ENCODE measurements at regions of chr7 and their contacts with region 1.

Region 1: DNA sequence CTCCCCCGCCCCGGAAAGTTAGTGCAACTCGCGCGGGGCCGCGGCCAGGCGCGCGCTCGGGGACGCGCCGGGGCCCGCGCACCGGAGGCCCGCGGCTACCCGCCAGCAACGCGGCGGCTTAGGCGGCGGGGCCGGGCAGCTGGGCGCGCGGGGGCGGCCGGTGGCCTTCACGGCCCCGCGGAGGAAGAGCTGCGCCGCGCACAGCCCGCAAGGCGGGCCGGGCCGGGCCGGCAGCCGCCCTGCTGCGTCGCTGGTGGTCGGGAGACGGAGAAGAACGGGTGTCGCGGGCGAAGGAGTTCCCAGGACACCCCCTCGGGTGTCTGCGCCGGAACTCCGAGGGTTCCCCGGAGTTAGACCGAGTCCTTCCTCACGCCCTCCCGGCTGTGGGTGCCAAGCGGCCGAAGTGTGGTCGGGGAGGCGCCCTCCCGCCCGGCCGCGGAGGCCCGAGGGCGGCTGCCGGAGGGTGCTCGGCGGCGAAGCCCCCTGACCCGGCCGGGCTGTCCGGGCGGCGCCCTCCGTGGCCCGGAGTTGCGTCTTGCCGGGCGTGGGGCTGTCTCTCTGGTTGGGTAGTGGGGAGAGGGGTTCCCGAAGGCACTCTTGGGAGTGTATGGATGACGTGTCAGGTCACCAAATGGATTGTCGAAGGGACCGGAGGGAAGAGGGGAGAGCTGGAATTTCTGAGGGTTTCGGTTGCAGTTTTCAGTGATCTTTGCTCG is 584 bp downstream of the ST7 start:
- DNase-seq: peak; percentile 73
- H3K4me3 ChIP-seq: peak overlapping the region; percentile 83
- H3K27ac ChIP-seq: peak overlapping the region; percentile 64
- H3K4me1 ChIP-seq: peaks cover 28% of the 10 kb centered on the region
- CTCF ChIP-seq: 0 out of 2 replicates have a peak, but pooled peaks have one; percentile 16

Region 2: GRCh38 chr7:116150588-116150987 is 803.3 kb before region 1 on chr7:
- CTCF ChIA-PET with region 1: no interaction called
- POLR2A ChIA-PET with region 1: no interaction called
- intact Hi-C with region 1: loop called (anchors 10 kb)
- DNase-seq: no peak
- H3K4me3 ChIP-seq: no peak overlapping the region
- H3K27ac ChIP-seq: no peak overlapping the region
- H3K4me1 ChIP-seq: peaks cover 3% of the 10 kb centered on the region
- CTCF ChIP-seq: no peak

Region 3: DNA sequence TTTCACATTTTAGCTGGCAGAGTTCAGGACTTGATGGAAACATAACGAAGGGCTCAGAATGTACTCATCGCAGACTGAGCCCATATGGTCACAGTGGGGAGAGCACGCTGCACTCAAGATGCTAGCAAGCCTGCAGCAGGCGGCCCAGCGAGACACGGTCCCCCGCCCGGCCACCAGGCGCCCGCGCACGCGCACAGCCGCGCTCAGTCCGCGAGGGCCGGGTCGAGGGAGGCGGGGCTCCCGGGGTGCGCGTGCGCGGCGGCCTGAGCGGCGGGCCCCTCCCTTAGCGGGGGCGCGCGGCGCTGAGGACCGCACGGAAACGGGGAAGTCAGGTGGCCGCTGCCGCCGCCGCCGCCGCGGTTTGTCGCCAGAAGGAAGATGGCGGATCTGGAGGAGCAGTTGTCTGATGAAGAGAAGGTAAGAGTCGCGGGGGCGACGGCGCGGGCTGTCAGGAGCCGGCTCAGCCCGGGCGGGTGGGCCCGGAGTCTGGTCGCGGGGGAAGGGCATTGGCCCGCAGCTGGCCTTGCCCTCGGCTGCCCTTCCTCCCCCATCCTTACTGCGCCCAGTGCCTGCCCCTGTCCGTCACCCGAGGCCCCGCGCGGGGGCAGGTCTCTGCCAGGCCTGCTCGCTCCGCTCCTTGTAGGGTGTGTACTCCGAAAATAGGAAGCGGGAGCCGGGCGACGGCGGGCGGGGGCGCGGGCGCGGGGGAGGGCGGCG is 91.5 kb before region 1 on chr7 and contains the start of gene CAPZA2:
- CTCF ChIA-PET with region 1: no interaction called
- POLR2A ChIA-PET with region 1: interaction called, 4 read pairs
- intact Hi-C with region 1: loop called (anchors 1 kb)
- DNase-seq: peak; percentile 94
- H3K4me3 ChIP-seq: peak within 1 kb of the TSS; percentile 99
- H3K27ac ChIP-seq: peak within 1 kb of the TSS; percentile 58
- H3K4me1 ChIP-seq: peaks cover 11% of the 10 kb centered on the region
- CTCF ChIP-seq: 0 out of 2 replicates have a peak, but pooled peaks have one; percentile 9
- total RNA-seq, gene CAPZA2: 42.1 and 53.3 TPM in 2 replicates

Region 4: GRCh38 chr7:117127585-117128168 is 173.8 kb after region 1 on chr7:
- CTCF ChIA-PET with region 1: no interaction called
- POLR2A ChIA-PET with region 1: interaction called, 4 read pairs
- intact Hi-C with region 1: loop called (anchors 5 kb)
- DNase-seq: peak; percentile 54
- H3K4me3 ChIP-seq: no peak overlapping the region
- H3K27ac ChIP-seq: no peak overlapping the region
- H3K4me1 ChIP-seq: no peaks in the 10 kb centered on the region
- CTCF ChIP-seq: peak; percentile 89

Measured in OCI-LY7 (cell line).